HCT116 (cell line): ENCODE measurements at regions of chr9 and their contacts with region 1.

Region 1: GRCh38 chr9:26612211-26612610 is 280.4 kb downstream of the CAAP1 start:
- DNase-seq: no peak
- ATAC-seq: no peak
- H3K4me3 ChIP-seq: no peak overlapping the region
- H3K27ac ChIP-seq: no peak overlapping the region
- H3K4me1 ChIP-seq: no peaks in the 10 kb centered on the region
- H3K27me3 ChIP-seq: no peaks in the 10 kb centered on the region
- CTCF ChIP-seq: no peak
- POLR2A ChIP-seq: no peak
- RAD21 ChIP-seq: no peak

Region 2: GRCh38 chr9:25964239-25964638 is 648.0 kb before region 1 on chr9:
- CTCF ChIA-PET with region 1: no interaction called
- POLR2A ChIA-PET with region 1: no interaction called
- RAD21 ChIA-PET with region 1: no interaction called
- intact Hi-C with region 1: loop called (anchors 5 kb)
- DNase-seq: peak; percentile 1
- ATAC-seq: peak; percentile 49; the same call in 1 of the 2 replicates
- H3K4me3 ChIP-seq: no peak overlapping the region
- H3K27ac ChIP-seq: no peak overlapping the region
- H3K4me1 ChIP-seq: no peaks in the 10 kb centered on the region
- H3K27me3 ChIP-seq: no peaks in the 10 kb centered on the region
- CTCF ChIP-seq: peak in 2 of 3 experiments; percentile 28 to 45; a peak in 4 of 6 replicates
- POLR2A ChIP-seq: no peak
- RAD21 ChIP-seq: peak; percentile 33

Region 3: GRCh38 chr9:26768145-26768544 is 155.9 kb after region 1 on chr9:
- CTCF ChIA-PET with region 1: no interaction called
- POLR2A ChIA-PET with region 1: no interaction called
- RAD21 ChIA-PET with region 1: no interaction called
- intact Hi-C with region 1: no loop called
- DNase-seq: no peak
- ATAC-seq: no peak
- H3K4me3 ChIP-seq: no peak overlapping the region
- H3K27ac ChIP-seq: no peak overlapping the region
- H3K4me1 ChIP-seq: no peaks in the 10 kb centered on the region
- H3K27me3 ChIP-seq: no peaks in the 10 kb centered on the region
- CTCF ChIP-seq: no peak
- POLR2A ChIP-seq: no peak
- RAD21 ChIP-seq: no peak